ENCODE measurements at regions of chr15 and their contacts with region 1.

Region 1: DNA sequence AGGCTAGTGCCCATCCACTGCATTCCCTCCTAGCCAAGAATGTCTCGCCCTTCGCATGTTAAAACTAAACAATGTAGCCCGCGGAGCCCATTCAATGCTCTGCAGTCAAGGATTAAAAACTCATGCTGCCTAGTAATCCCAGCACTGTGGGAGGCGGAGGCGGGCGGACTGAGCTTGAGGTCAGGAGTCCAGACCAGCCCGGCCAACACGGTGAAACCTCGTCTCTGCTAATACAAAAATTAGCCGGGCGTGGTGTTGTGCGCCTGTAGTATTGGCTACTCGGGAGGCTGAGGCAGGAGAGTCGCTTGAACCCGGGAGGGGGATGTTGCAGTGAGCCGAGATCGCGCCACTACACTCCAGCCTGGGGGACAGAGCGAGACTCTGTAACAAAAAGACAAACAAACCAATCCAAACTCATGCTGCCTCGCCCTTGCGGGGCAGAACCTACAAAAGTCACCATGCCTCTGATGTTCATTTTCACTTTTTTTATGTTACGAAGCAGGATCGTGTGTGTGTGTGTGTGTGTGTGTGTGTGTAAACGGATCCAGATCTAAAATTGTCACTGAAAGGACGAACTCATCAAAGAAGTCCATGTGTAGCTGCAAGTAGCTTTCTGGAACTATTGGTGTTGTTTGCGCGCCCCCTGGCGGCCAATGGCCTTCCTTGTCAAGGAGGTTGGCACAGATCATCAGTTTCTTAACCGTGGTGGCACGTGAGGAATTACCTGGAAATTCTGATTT is 54.8 kb upstream of the SPESP1 start:
- DNase-seq: peak; percentile 92 to 97 (median 96)
- ATAC-seq: peak; percentile 93 to 95
- H3K4me3 ChIP-seq: peak overlapping the region; percentile 23
- H3K27ac ChIP-seq: no peak overlapping the region
- H3K4me1 ChIP-seq: no peaks in the 10 kb centered on the region
- H3K27me3 ChIP-seq: no peaks in the 10 kb centered on the region

Region 2: DNA sequence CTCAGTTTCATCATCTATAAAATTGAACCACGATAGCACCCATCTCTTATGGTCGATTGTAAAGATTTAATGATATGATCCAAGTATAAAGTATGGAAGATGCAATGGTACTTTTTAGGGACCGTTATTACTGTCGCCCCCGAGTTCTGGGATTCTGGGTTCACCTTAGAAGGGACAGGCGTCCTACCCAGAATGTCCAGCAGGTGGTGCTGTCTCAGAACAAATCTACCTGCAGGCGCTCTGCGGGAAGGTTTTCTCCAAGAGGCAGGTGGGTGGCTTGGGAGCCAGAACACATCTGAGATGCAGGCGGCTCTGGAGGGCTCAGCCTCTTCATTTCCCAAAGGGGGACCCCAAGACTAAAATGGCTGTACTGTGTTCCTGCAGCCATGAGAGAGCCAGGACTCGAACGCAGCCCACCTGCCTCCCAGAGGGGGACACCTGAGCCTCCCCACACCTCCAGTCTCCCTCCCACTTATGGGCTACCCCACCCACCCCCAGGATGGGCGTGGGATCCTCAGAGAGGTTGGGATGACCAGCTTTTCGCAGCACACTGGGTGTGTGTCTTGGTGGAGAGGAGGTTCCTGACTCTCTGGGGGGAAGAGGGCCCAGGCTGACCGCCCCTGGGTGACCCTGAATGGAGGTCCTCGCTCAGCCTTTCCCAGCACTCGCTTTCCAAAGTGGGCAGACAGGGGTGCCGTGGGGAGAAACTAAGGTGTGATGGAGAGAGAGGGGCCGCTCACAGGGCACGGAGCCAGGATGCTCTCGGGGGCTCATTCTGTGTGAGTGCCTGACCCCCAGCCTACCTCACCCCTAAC is 324.9 kb before region 1 on chr15:
- intact Hi-C with region 1: loop called (anchors 2 to 5 kb)
- DNase-seq: peak; percentile 66 to 91 (median 85)
- ATAC-seq: peak; percentile 25 to 35
- H3K4me3 ChIP-seq: no peak overlapping the region
- H3K27ac ChIP-seq: no peak overlapping the region
- H3K4me1 ChIP-seq: peaks cover 2% of the 10 kb centered on the region
- H3K27me3 ChIP-seq: no peaks in the 10 kb centered on the region

Region 3: GRCh38 chr15:68672781-68673205 is 202.8 kb before region 1 on chr15:
- intact Hi-C with region 1: loop called in 1 of 4 experiments (anchors 10 kb)
- DNase-seq: no peak
- ATAC-seq: no peak
- H3K4me3 ChIP-seq: no peak overlapping the region
- H3K27ac ChIP-seq: no peak overlapping the region
- H3K4me1 ChIP-seq: peaks cover 3% of the 10 kb centered on the region
- H3K27me3 ChIP-seq: no peaks in the 10 kb centered on the region

Region 4: DNA sequence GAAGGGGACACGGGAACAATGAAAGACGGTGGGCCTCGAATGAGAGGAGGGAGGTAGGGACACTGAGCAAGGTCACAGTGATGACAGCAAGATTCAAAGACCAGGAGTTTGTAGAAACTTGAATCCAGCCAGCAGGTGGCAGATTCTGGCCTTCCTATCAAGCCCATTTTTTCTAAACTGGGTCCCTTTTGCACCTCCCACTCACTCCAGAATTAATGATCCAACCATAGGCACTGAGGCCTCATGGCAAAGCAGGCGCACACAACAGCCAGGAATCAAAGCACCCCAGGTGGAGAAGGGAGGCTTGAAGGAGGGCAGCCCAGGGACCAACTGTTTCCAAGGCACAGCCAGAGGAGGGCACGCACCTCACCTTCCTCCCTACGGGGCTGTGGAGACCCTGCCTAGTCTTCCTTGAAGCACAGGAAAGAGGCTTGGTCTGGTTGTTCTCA is 145.1 kb before region 1 on chr15:
- intact Hi-C with region 1: loop called (anchors 5 to 10 kb)
- DNase-seq: peak in 2 of 3 donors; percentile 46 to 75
- ATAC-seq: peak; percentile 27 to 62
- H3K4me3 ChIP-seq: no peak overlapping the region
- H3K27ac ChIP-seq: peak overlapping the region; percentile 76
- H3K4me1 ChIP-seq: peaks cover 14% of the 10 kb centered on the region
- H3K27me3 ChIP-seq: no peaks in the 10 kb centered on the region

Region 5: GRCh38 chr15:68817304-68818065 is 58.1 kb before region 1 on chr15:
- intact Hi-C with region 1: no loop called
- DNase-seq: peak; percentile 65 to 90 (median 87)
- ATAC-seq: peak; percentile 36 to 47
- H3K4me3 ChIP-seq: peak overlapping the region; percentile 98
- H3K27ac ChIP-seq: peak overlapping the region; percentile 99
- H3K4me1 ChIP-seq: peaks cover 22% of the 10 kb centered on the region
- H3K27me3 ChIP-seq: no peaks in the 10 kb centered on the region

Measured in right cardiac atrium (tissue), 5 donors.